ENCODE measurements at regions of chr11 and their contacts with region 1.

Region 1: GRCh38 chr11:74388678-74389327 is 9.4 kb downstream of the PGM2L1 start:
- DNase-seq: peak; percentile 70
- H3K4me3 ChIP-seq: no peak overlapping the region
- H3K27ac ChIP-seq: peak overlapping the region; percentile 17
- H3K4me1 ChIP-seq: peaks cover 5% of the 10 kb centered on the region
- H3K27me3 ChIP-seq: no peaks in the 10 kb centered on the region
- CTCF ChIP-seq: peak; percentile 37 to 57
- POLR2A ChIP-seq: no peak

Region 2: GRCh38 chr11:74371279-74372049 is 17.3 kb before region 1 on chr11:
- CTCF ChIA-PET with region 1: interaction called, 12 read pairs
- POLR2A ChIA-PET with region 1: no interaction called
- dilution Hi-C with region 1: no loop called
- intact Hi-C with region 1: no loop called
- DNase-seq: peak; percentile 75
- H3K4me3 ChIP-seq: no peak overlapping the region
- H3K27ac ChIP-seq: no peak overlapping the region
- H3K4me1 ChIP-seq: no peaks in the 10 kb centered on the region
- H3K27me3 ChIP-seq: no peaks in the 10 kb centered on the region
- CTCF ChIP-seq: no peak
- POLR2A ChIP-seq: no peak

Region 3: GRCh38 chr11:74437441-74438042 is 48.7 kb after region 1 on chr11:
- CTCF ChIA-PET with region 1: interaction called, 20 read pairs
- POLR2A ChIA-PET with region 1: no interaction called
- dilution Hi-C with region 1: no loop called
- intact Hi-C with region 1: no loop called
- DNase-seq: peak; percentile 82
- H3K4me3 ChIP-seq: no peak overlapping the region
- H3K27ac ChIP-seq: peak overlapping the region; percentile 52
- H3K4me1 ChIP-seq: peaks cover 14% of the 10 kb centered on the region
- H3K27me3 ChIP-seq: no peaks in the 10 kb centered on the region
- CTCF ChIP-seq: no peak
- POLR2A ChIP-seq: no peak

Region 4: GRCh38 chr11:74443071-74443864 is 54.5 kb after region 1 on chr11:
- CTCF ChIA-PET with region 1: interaction called, 134 read pairs
- POLR2A ChIA-PET with region 1: no interaction called
- dilution Hi-C with region 1: no loop called
- intact Hi-C with region 1: no loop called
- DNase-seq: peak; percentile 70
- H3K4me3 ChIP-seq: no peak overlapping the region
- H3K27ac ChIP-seq: no peak overlapping the region
- H3K4me1 ChIP-seq: no peaks in the 10 kb centered on the region
- H3K27me3 ChIP-seq: no peaks in the 10 kb centered on the region
- CTCF ChIP-seq: peak in 1 of 2 donors; percentile 26
- POLR2A ChIP-seq: no peak

Measured in endothelial cell of umbilical vein (primary cell).